Motor neuron (in vitro differentiated cells): ENCODE measurements at regions of chr2 and their contacts with region 1.

Region 1: GRCh38 chr2:191806396-191806795 is 40.5 kb downstream of the CAVIN2 start:
- ATAC-seq: peak in 1 of 8 experiments; percentile 57
- H3K4me3 ChIP-seq: no peak overlapping the region
- H3K27ac ChIP-seq: no peak overlapping the region
- H3K4me1 ChIP-seq: peaks cover 0 to 13% of the 10 kb centered on the region in 2 donors

Region 2: GRCh38 chr2:192151853-192152252 is 345.5 kb after region 1 on chr2:
- in situ Hi-C with region 1: loop called in 5 of 9 experiments (anchors 10 to 25 kb)
- ATAC-seq: peak in 3 of 8 experiments; percentile 59 to 90 (median 79)
- H3K4me3 ChIP-seq: no peak overlapping the region
- H3K27ac ChIP-seq: no peak overlapping the region
- H3K4me1 ChIP-seq: peaks cover 0 to 18% of the 10 kb centered on the region in 2 donors